CD4-positive, alpha-beta T cell (primary cell): ENCODE measurements at regions of chr15 and their contacts with region 1.

Region 1: DNA sequence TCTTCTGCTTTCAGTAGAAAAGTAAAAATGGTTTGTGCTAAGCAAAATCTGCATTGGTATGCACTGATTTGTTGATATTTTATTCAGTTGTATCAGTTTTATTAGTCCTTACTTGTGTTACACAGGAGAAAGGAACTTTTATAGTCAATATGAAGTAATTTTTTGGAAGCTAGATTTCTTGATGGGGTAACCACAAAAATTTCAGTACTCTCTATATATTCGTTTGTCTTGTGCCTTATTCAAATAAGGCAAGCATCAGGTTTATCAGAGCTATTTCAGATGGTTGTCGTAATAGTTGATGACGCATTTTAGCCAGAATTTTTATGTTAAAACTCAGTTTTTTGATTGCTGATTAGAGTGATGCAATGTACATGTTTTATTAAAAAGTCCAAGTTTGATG is 50.7 kb upstream of the NIPA1 start:
- DNase-seq: no peak
- ATAC-seq: no peak
- H3K4me3 ChIP-seq: no peak overlapping the region
- H3K4me3 Mint-ChIP-seq: no peak overlapping the region
- H3K27ac ChIP-seq: no peak overlapping the region
- H3K27ac Mint-ChIP-seq: no peak overlapping the region
- H3K4me1 ChIP-seq: no peaks in the 10 kb centered on the region
- H3K4me1 Mint-ChIP-seq: peaks cover 11% of the 10 kb centered on the region
- H3K27me3 ChIP-seq: no peaks in the 10 kb centered on the region
- H3K27me3 Mint-ChIP-seq: peaks cover 5% of the 10 kb centered on the region
- CTCF ChIP-seq: no peak

Region 2: GRCh38 chr15:23064156-23064555 is 328.4 kb after region 1 on chr15:
- CTCF ChIA-PET with region 1: no interaction called
- POLR2A ChIA-PET with region 1: no interaction called
- intact Hi-C with region 1: no loop called
- DNase-seq: no peak
- ATAC-seq: no peak
- H3K4me3 ChIP-seq: no peak overlapping the region
- H3K4me3 Mint-ChIP-seq: no peak overlapping the region
- H3K27ac ChIP-seq: no peak overlapping the region
- H3K27ac Mint-ChIP-seq: no peak overlapping the region
- H3K4me1 ChIP-seq: no peaks in the 10 kb centered on the region
- H3K4me1 Mint-ChIP-seq: no peaks in the 10 kb centered on the region
- H3K27me3 ChIP-seq: no peaks in the 10 kb centered on the region
- H3K27me3 Mint-ChIP-seq: peaks cover 6% of the 10 kb centered on the region
- CTCF ChIP-seq: no peak

Region 3: GRCh38 chr15:23588268-23588667 is 852.5 kb after region 1 on chr15:
- CTCF ChIA-PET with region 1: no interaction called
- POLR2A ChIA-PET with region 1: no interaction called
- intact Hi-C with region 1: loop called in 1 of 2 experiments (anchors 10 kb)
- DNase-seq: no peak
- ATAC-seq: no peak
- H3K4me3 ChIP-seq: no peak overlapping the region
- H3K4me3 Mint-ChIP-seq: no peak overlapping the region
- H3K27ac ChIP-seq: no peak overlapping the region
- H3K27ac Mint-ChIP-seq: no peak overlapping the region
- H3K4me1 ChIP-seq: no peaks in the 10 kb centered on the region
- H3K4me1 Mint-ChIP-seq: no peaks in the 10 kb centered on the region
- H3K27me3 ChIP-seq: no peaks in the 10 kb centered on the region
- H3K27me3 Mint-ChIP-seq: no peaks in the 10 kb centered on the region
- CTCF ChIP-seq: no peak